ENCODE measurements at regions of chr4 and their contacts with region 1.

Region 1: GRCh38 chr4:164648151-164648848 is 105.6 kb upstream of the SMIM31 start:
- DNase-seq: peak; percentile 91
- ATAC-seq: peak; percentile 89
- H3K4me3 ChIP-seq: peak overlapping the region; percentile 44; the same call in 1 of the 2 replicates
- H3K27ac ChIP-seq: peak overlapping the region; percentile 98
- H3K4me1 ChIP-seq: peaks cover 11% of the 10 kb centered on the region
- H3K27me3 ChIP-seq: no peaks in the 10 kb centered on the region
- CTCF ChIP-seq: no peak

Region 2: GRCh38 chr4:164350061-164350460 is 298.2 kb before region 1 on chr4:
- CTCF ChIA-PET with region 1: no interaction called
- POLR2A ChIA-PET with region 1: no interaction called
- intact Hi-C with region 1: loop called (anchors 1 kb)
- DNase-seq: peak; percentile 76
- ATAC-seq: peak; percentile 74
- H3K4me3 ChIP-seq: peak overlapping the region; percentile 58
- H3K27ac ChIP-seq: peak overlapping the region; percentile 49
- H3K4me1 ChIP-seq: peaks cover 21% of the 10 kb centered on the region
- H3K27me3 ChIP-seq: no peaks in the 10 kb centered on the region
- CTCF ChIP-seq: no peak

Region 3: GRCh38 chr4:164440199-164440598 is 208.1 kb before region 1 on chr4:
- CTCF ChIA-PET with region 1: no interaction called
- POLR2A ChIA-PET with region 1: no interaction called
- intact Hi-C with region 1: loop called (anchors 5 kb)
- DNase-seq: peak; percentile 87
- ATAC-seq: peak; percentile 88
- H3K4me3 ChIP-seq: peak overlapping the region; percentile 37
- H3K27ac ChIP-seq: peak overlapping the region; percentile 86
- H3K4me1 ChIP-seq: peaks cover 44% of the 10 kb centered on the region
- H3K27me3 ChIP-seq: no peaks in the 10 kb centered on the region
- CTCF ChIP-seq: no peak

Region 4: GRCh38 chr4:164572877-164573279 is 75.4 kb before region 1 on chr4:
- CTCF ChIA-PET with region 1: no interaction called
- POLR2A ChIA-PET with region 1: no interaction called
- intact Hi-C with region 1: loop called (anchors 5 kb)
- DNase-seq: peak; percentile 80
- ATAC-seq: peak; percentile 90
- H3K4me3 ChIP-seq: no peak overlapping the region
- H3K27ac ChIP-seq: peak overlapping the region; percentile 67
- H3K4me1 ChIP-seq: peaks cover 22% of the 10 kb centered on the region
- H3K27me3 ChIP-seq: no peaks in the 10 kb centered on the region
- CTCF ChIP-seq: no peak

Region 5: DNA sequence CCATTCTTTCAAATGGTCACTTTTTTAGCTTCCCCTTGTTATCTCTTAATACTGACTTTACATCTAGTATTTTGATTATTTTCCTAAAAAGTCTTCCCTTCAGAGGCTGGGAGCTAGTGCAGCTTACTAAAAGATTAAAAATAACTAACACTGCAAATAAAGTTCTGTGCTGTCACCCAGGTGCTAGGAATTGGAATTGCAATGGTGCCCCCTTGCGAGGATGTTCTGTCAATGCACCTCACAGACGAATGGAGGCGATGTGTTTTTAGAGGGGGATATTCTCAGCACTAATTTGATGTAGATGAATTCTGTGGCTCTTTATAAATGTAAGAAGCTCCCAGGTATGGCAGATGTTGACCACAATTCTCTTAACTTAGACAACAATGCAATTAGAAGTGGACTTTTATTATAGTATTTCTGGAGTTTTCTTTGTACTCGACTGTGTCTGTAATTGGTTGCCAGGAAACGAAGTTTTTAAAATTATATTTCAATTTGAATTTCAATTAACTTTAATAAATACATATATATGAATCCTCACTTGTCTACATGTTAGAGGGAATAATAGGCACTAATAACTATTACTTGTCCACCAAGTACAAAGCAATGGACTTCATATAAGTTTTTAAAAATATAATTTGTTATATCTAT is 83.7 kb after region 1 on chr4:
- CTCF ChIA-PET with region 1: no interaction called
- POLR2A ChIA-PET with region 1: no interaction called
- intact Hi-C with region 1: loop called (anchors 1 kb)
- DNase-seq: peak; percentile 63
- ATAC-seq: peak; percentile 51; the same call in 1 of the 2 replicates
- H3K4me3 ChIP-seq: no peak overlapping the region
- H3K27ac ChIP-seq: no peak overlapping the region
- H3K4me1 ChIP-seq: no peaks in the 10 kb centered on the region
- H3K27me3 ChIP-seq: no peaks in the 10 kb centered on the region
- CTCF ChIP-seq: peak; percentile 86

Region 6: DNA sequence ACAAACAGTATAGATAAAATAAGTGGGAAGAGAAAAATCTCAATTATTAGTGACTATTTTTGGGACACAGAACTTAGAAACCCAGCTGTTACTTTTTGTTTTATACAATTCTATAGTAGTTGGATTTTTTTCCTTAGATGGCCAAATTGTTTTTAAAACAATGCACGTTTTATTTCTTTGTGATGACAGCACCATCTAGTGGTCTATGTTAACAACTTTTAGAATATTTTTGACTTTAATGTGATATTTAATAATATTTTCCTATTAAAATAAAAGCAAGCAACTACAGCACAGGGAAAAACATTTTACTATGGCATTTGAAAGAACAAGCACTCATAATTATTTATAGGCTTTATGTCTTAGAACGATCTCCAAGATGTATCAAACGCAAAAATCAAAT is 100.1 kb after region 1 on chr4:
- CTCF ChIA-PET with region 1: no interaction called
- POLR2A ChIA-PET with region 1: no interaction called
- intact Hi-C with region 1: no loop called
- DNase-seq: peak; percentile 52
- ATAC-seq: no peak
- H3K4me3 ChIP-seq: no peak overlapping the region
- H3K27ac ChIP-seq: no peak overlapping the region
- H3K4me1 ChIP-seq: peaks cover 4% of the 10 kb centered on the region; the same call in 1 of the 2 replicates
- H3K27me3 ChIP-seq: no peaks in the 10 kb centered on the region
- CTCF ChIP-seq: peak; percentile 54

Measured in PC-3 (cell line).